ENCODE measurements at regions of chr7 and their contacts with region 1.

Region 1: DNA sequence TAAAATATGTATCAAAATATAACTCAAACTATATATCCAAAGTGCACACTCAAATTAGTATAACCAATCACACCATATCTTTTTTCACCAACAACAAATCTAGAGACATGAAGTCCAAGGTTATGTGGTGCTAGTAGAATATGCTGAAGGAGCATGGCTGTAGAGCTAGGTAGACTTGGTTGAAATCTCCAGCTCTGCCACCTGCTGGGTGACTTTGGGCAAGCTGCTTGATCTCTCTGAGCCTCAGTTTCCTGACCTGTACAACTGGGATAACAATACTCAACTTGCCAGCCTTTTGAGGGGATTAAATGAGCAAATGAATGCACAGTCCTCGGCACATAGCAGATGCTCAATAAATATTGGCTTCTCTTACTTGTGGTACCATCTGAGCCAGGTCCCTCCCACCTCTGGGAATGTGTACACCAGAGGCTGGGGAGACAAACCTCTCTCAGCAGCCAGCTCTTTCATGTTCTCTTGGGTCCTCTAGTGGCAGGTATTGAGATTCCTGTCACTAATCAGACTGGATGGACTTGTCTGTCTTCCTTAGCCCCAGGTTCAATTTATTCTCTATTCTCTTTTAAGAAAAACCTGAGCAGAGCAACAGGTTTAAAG is 94.2 kb upstream of the PDE1C start:
- DNase-seq: no peak
- ATAC-seq: peak; percentile 72

Region 2: DNA sequence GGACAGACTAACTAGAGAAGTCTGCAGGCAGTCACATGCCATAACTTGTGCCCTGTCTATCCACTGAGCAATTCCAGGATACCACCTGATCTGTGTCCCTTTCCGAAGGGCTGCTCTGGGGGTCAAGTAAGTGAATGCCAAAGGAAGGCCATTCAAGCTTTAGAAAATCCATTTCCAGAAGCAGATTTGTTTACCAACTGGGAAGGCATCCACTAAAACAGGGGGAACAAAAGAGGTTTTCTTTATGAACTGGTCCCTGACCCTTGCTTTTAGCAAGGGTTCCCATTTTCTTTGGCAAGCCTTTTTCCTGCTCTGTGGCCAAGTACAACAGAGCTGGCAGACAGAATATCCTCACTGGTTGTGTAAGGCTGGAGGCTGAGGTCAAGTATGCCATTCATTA is 614.0 kb before region 1 on chr7:
- intact Hi-C with region 1: no loop called
- DNase-seq: no peak
- ATAC-seq: peak; percentile 69

Region 3: GRCh38 chr7:31776616-31777015 is 387.8 kb before region 1 on chr7:
- intact Hi-C with region 1: loop called (anchors 10 kb)
- DNase-seq: no peak
- ATAC-seq: no peak

Measured in Right ventricle myocardium inferior (tissue), 1 donor.